GM12878 (cell line): ENCODE measurements at regions of chr9 and their contacts with region 1.

Region 1: DNA sequence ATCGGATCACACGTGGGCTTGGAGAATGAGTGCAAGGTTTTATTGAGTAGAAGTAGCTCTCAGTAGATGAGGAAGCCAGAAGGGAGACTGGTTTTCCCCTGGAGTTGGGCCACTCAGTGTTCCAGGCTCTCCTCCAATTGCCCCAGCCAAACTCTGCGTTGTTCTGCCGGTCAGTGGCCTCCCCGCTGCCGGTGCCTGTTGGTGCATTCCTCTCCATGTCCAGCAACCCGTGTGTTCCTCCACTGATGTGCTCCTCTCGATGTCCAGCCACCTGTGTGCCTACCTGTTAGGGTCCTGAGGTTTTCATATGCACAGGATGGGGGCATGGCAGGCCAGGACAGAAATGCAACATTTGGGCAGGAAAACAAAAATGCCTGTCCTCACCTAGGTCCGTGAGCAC is 888.0 kb upstream of the PTPRD start:
- DNase-seq: no peak
- ATAC-seq: no peak
- H3K4me3 ChIP-seq: no peak overlapping the region
- H3K27ac ChIP-seq: no peak overlapping the region
- H3K4me1 ChIP-seq: no peaks in the 10 kb centered on the region
- H3K27me3 ChIP-seq: no peaks in the 10 kb centered on the region
- CTCF ChIP-seq: no peak
- EP300 ChIP-seq: no peak
- POLR2A ChIP-seq: no peak
- RAD21 ChIP-seq: no peak

Region 2: GRCh38 chr9:11431490-11431889 is 69.3 kb before region 1 on chr9:
- CTCF ChIA-PET with region 1: no interaction called
- POLR2A ChIA-PET with region 1: no interaction called
- RAD21 ChIA-PET with region 1: no interaction called
- SMC1A ChIA-PET with region 1: no interaction called
- in situ Hi-C with region 1: no loop called
- intact Hi-C with region 1: loop called (anchors 10 kb)
- DNase-seq: no peak
- ATAC-seq: no peak
- H3K4me3 ChIP-seq: no peak overlapping the region
- H3K27ac ChIP-seq: no peak overlapping the region
- H3K4me1 ChIP-seq: no peaks in the 10 kb centered on the region
- H3K27me3 ChIP-seq: no peaks in the 10 kb centered on the region
- CTCF ChIP-seq: no peak
- EP300 ChIP-seq: no peak
- POLR2A ChIP-seq: no peak
- RAD21 ChIP-seq: no peak

Region 3: DNA sequence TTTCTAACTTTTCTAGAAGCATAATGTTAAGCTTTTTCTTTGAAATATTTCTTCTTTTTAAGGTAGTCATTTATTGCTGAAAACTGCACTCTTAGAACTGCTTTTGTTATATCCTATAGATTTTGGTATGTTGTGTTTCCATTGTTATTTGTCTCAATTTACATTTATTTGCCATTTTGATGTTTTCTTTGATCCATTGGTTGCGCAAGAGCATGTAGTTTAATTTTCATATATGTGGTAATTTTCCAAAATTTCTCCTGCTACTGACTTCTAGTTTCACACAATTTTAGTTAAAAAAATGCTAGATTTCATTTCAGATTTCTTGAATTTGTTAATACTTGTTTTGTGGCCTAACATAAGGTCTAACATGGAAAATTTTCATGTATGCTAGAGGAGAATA is 163.1 kb after region 1 on chr9:
- CTCF ChIA-PET with region 1: no interaction called
- POLR2A ChIA-PET with region 1: no interaction called
- RAD21 ChIA-PET with region 1: no interaction called
- SMC1A ChIA-PET with region 1: no interaction called
- in situ Hi-C with region 1: no loop called
- intact Hi-C with region 1: no loop called
- DNase-seq: no peak
- ATAC-seq: no peak
- H3K4me3 ChIP-seq: no peak overlapping the region
- H3K27ac ChIP-seq: no peak overlapping the region
- H3K4me1 ChIP-seq: no peaks in the 10 kb centered on the region
- H3K27me3 ChIP-seq: no peaks in the 10 kb centered on the region
- CTCF ChIP-seq: no peak
- EP300 ChIP-seq: no peak
- POLR2A ChIP-seq: no peak
- RAD21 ChIP-seq: no peak